ENCODE measurements at regions of chr9 and their contacts with region 1.

Region 1: GRCh38 chr9:126916909-126917308 is 2.3 kb downstream of the RALGPS1 start:
- DNase-seq: peak; percentile 48
- ATAC-seq: peak; percentile 43
- H3K4me3 ChIP-seq: no peak overlapping the region
- H3K27ac ChIP-seq: no peak overlapping the region
- H3K4me1 ChIP-seq: peaks cover 64% of the 10 kb centered on the region
- H3K27me3 ChIP-seq: 0 out of 5 replicates have a peak, but pooled peaks cover 0 to 6% of the 10 kb centered on the region in 2 experiments
- CTCF ChIP-seq: peak; percentile 54
- EP300 ChIP-seq: no peak
- POLR2A ChIP-seq: no peak
- RAD21 ChIP-seq: no peak

Region 2: GRCh38 chr9:126439402-126439765 is 477.5 kb before region 1 on chr9:
- CTCF ChIA-PET with region 1: no interaction called
- POLR2A ChIA-PET with region 1: no interaction called
- in situ Hi-C with region 1: no loop called
- intact Hi-C with region 1: no loop called
- DNase-seq: no peak
- ATAC-seq: no peak
- H3K4me3 ChIP-seq: no peak overlapping the region
- H3K27ac ChIP-seq: no peak overlapping the region
- H3K4me1 ChIP-seq: no peaks in the 10 kb centered on the region
- H3K27me3 ChIP-seq: no peaks in the 10 kb centered on the region
- CTCF ChIP-seq: no peak
- EP300 ChIP-seq: no peak
- POLR2A ChIP-seq: no peak
- RAD21 ChIP-seq: no peak

Region 3: DNA sequence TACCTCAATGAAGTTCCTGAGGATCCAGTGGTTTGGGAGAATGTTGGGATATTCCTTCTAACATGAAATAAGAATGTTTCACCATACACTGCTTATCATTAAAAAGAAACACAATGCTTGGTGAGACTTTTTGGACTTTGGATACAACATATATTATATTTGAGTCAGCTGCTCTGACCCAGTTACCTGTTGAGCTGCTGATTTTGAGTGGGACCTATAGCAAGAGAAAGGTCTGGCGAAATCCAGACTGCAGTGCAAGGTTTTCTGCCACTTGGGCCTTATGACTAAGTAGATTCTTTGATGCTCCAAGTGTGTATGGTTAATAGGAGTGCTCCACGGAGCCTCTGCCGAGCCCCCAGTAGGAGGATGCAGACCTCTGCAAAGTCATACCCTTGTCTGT is 12.3 kb before region 1 on chr9:
- CTCF ChIA-PET with region 1: no interaction called
- POLR2A ChIA-PET with region 1: no interaction called
- in situ Hi-C with region 1: no loop called
- intact Hi-C with region 1: loop called (anchors 2 kb)
- DNase-seq: no peak
- ATAC-seq: no peak
- H3K4me3 ChIP-seq: no peak overlapping the region
- H3K27ac ChIP-seq: no peak overlapping the region
- H3K4me1 ChIP-seq: no peaks in the 10 kb centered on the region
- H3K27me3 ChIP-seq: peaks cover 2 to 8% of the 10 kb centered on the region in 2 experiments; a peak in 3 of 5 replicates
- CTCF ChIP-seq: no peak
- EP300 ChIP-seq: no peak
- POLR2A ChIP-seq: no peak
- RAD21 ChIP-seq: no peak

Region 4: GRCh38 chr9:126939821-126940221 is 22.9 kb after region 1 on chr9:
- CTCF ChIA-PET with region 1: no interaction called
- POLR2A ChIA-PET with region 1: interaction called, 8 read pairs
- in situ Hi-C with region 1: no loop called
- intact Hi-C with region 1: loop called (anchors 2 kb)
- DNase-seq: peak; percentile 84
- ATAC-seq: peak; percentile 93
- H3K4me3 ChIP-seq: peak overlapping the region in 2 of 3 experiments; percentile 45 to 51; a peak in 4 of 6 replicates
- H3K27ac ChIP-seq: peak overlapping the region; percentile 42
- H3K4me1 ChIP-seq: peaks cover 36% of the 10 kb centered on the region
- H3K27me3 ChIP-seq: no peaks in the 10 kb centered on the region
- CTCF ChIP-seq: no peak
- EP300 ChIP-seq: no peak
- POLR2A ChIP-seq: no peak
- RAD21 ChIP-seq: no peak

Measured in HepG2 (cell line).